GM12878 (cell line): ENCODE measurements at regions of chr22 and their contacts with region 1.

Region 1: GRCh38 chr22:30763815-30764686 is 69.4 kb downstream of the OSBP2 start:
- DNase-seq: no peak
- ATAC-seq: peak; percentile 90
- H3K4me3 ChIP-seq: no peak overlapping the region
- H3K27ac ChIP-seq: no peak overlapping the region
- H3K4me1 ChIP-seq: no peaks in the 10 kb centered on the region
- H3K27me3 ChIP-seq: no peaks in the 10 kb centered on the region
- CTCF ChIP-seq: peak; percentile 60 to 78 (median 62); a peak in 5 of 6 replicates
- EP300 ChIP-seq: no peak
- POLR2A ChIP-seq: no peak
- RAD21 ChIP-seq: peak; percentile 90

Region 2: GRCh38 chr22:30667494-30668385 is 96.3 kb before region 1 on chr22 and contains the start of gene DUSP18:
- CTCF ChIA-PET with region 1: no interaction called
- POLR2A ChIA-PET with region 1: no interaction called
- RAD21 ChIA-PET with region 1: no interaction called
- SMC1A ChIA-PET with region 1: no interaction called
- in situ Hi-C with region 1: no loop called
- intact Hi-C with region 1: no loop called
- DNase-seq: peak; percentile 64
- ATAC-seq: peak; percentile 98
- H3K4me3 ChIP-seq: peak within 1 kb of the TSS; percentile 77
- H3K27ac ChIP-seq: no peak within 1 kb of the TSS; the same call in 1 of the 2 replicates
- H3K4me1 ChIP-seq: no peaks in the 10 kb centered on the region
- H3K27me3 ChIP-seq: no peaks in the 10 kb centered on the region
- CTCF ChIP-seq: peak in 2 of 3 experiments; percentile 21 to 25; a peak in 1 of 6 replicates
- EP300 ChIP-seq: no peak
- POLR2A ChIP-seq: peak; percentile 82
- RAD21 ChIP-seq: no peak
- polyA plus RNA-seq, gene DUSP18: 1.9 to 2.5 TPM

Region 3: GRCh38 chr22:30876915-30877553 is 113.0 kb after region 1 on chr22:
- CTCF ChIA-PET with region 1: no interaction called
- POLR2A ChIA-PET with region 1: no interaction called
- RAD21 ChIA-PET with region 1: no interaction called
- SMC1A ChIA-PET with region 1: no interaction called
- in situ Hi-C with region 1: no loop called
- intact Hi-C with region 1: no loop called
- DNase-seq: no peak
- ATAC-seq: peak; percentile 35
- H3K4me3 ChIP-seq: no peak overlapping the region
- H3K27ac ChIP-seq: no peak overlapping the region
- H3K4me1 ChIP-seq: no peaks in the 10 kb centered on the region
- H3K27me3 ChIP-seq: no peaks in the 10 kb centered on the region
- CTCF ChIP-seq: no peak
- EP300 ChIP-seq: no peak
- POLR2A ChIP-seq: no peak
- RAD21 ChIP-seq: no peak

Region 4: GRCh38 chr22:30890686-30891442 is 126.8 kb after region 1 on chr22:
- CTCF ChIA-PET with region 1: interaction called, 6 read pairs
- POLR2A ChIA-PET with region 1: no interaction called
- RAD21 ChIA-PET with region 1: no interaction called
- SMC1A ChIA-PET with region 1: interaction called, 4 read pairs
- in situ Hi-C with region 1: no loop called
- intact Hi-C with region 1: loop called (anchors 5 kb)
- DNase-seq: no peak
- ATAC-seq: peak; percentile 84
- H3K4me3 ChIP-seq: no peak overlapping the region
- H3K27ac ChIP-seq: no peak overlapping the region
- H3K4me1 ChIP-seq: no peaks in the 10 kb centered on the region
- H3K27me3 ChIP-seq: no peaks in the 10 kb centered on the region
- CTCF ChIP-seq: peak; percentile 48 to 75 (median 75)
- EP300 ChIP-seq: no peak
- POLR2A ChIP-seq: no peak
- RAD21 ChIP-seq: peak; percentile 40; the same call in 1 of the 2 replicates

Region 5: GRCh38 chr22:30908051-30908461 is 144.0 kb after region 1 on chr22:
- CTCF ChIA-PET with region 1: interaction called, 13 read pairs
- POLR2A ChIA-PET with region 1: no interaction called
- RAD21 ChIA-PET with region 1: interaction called, 6 read pairs
- SMC1A ChIA-PET with region 1: no interaction called
- in situ Hi-C with region 1: loop called (anchors 25 kb)
- intact Hi-C with region 1: no loop called
- DNase-seq: no peak
- ATAC-seq: no peak
- H3K4me3 ChIP-seq: no peak overlapping the region
- H3K27ac ChIP-seq: no peak overlapping the region
- H3K4me1 ChIP-seq: peaks cover 5% of the 10 kb centered on the region
- H3K27me3 ChIP-seq: no peaks in the 10 kb centered on the region
- CTCF ChIP-seq: no peak
- EP300 ChIP-seq: no peak
- POLR2A ChIP-seq: no peak
- RAD21 ChIP-seq: no peak

Region 6: DNA sequence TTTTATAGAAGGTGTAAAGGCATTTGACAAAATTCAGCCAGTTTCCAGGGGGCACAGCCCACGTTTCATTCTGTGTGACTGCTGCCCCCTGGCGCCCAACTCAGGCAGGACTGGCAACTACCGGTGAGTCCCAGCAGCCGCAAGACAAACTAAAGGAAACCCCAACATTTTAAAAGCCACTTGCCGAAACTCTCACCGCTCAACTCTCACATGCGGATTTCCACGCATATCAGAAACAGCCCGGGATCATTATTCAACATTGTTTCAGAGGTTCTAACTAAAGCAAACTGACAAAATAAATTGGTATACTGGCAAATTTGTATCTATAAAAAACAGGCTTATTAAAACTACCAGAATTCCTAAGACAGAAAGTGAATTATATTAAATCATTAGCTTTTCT is 156.4 kb after region 1 on chr22:
- CTCF ChIA-PET with region 1: interaction called, 82 read pairs
- POLR2A ChIA-PET with region 1: interaction called, 3 read pairs
- RAD21 ChIA-PET with region 1: interaction called, 33 read pairs
- SMC1A ChIA-PET with region 1: interaction called, 38 read pairs
- in situ Hi-C with region 1: loop called (anchors 25 kb)
- intact Hi-C with region 1: loop called (anchors 1 kb)
- DNase-seq: peak; percentile 27
- ATAC-seq: peak; percentile 85
- H3K4me3 ChIP-seq: peak overlapping the region; percentile 50; the same call in 1 of the 2 replicates
- H3K27ac ChIP-seq: no peak overlapping the region
- H3K4me1 ChIP-seq: peaks cover 3% of the 10 kb centered on the region; the same call in 1 of the 2 replicates
- H3K27me3 ChIP-seq: no peaks in the 10 kb centered on the region
- CTCF ChIP-seq: peak; percentile 85 to 87 (median 86)
- EP300 ChIP-seq: no peak
- POLR2A ChIP-seq: no peak
- RAD21 ChIP-seq: peak; percentile 64

Region 7: GRCh38 chr22:31148953-31149627 is 385.0 kb after region 1 on chr22:
- CTCF ChIA-PET with region 1: interaction called, 4 read pairs
- POLR2A ChIA-PET with region 1: no interaction called
- RAD21 ChIA-PET with region 1: interaction called, 5 read pairs
- SMC1A ChIA-PET with region 1: no interaction called
- in situ Hi-C with region 1: no loop called
- intact Hi-C with region 1: loop called (anchors 1 kb)
- DNase-seq: no peak
- ATAC-seq: peak; percentile 93
- H3K4me3 ChIP-seq: no peak overlapping the region
- H3K27ac ChIP-seq: no peak overlapping the region
- H3K4me1 ChIP-seq: no peaks in the 10 kb centered on the region
- H3K27me3 ChIP-seq: no peaks in the 10 kb centered on the region
- CTCF ChIP-seq: peak; percentile 87 to 94 (median 90)
- EP300 ChIP-seq: no peak
- POLR2A ChIP-seq: no peak
- RAD21 ChIP-seq: peak; percentile 81